ENCODE measurements at regions of chr12 and their contacts with region 1.

Region 1: DNA sequence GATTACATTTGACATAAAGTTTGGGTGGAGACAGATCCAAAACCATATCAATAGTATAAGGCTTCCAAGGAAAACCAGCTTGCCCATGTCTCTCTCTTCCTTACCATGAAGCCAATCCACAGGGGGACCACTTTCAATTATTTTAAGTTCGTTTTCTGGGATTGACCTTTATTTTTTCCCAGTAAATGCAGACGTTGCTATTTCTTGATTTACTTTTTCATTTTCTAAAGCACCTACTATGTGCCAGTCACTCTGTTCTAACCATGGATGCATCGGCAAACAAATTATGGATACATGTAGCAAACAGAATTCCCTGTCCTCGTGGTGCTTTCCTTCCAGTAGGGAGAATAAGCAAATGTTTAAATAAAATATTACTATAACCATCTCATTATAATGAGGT is 65.8 kb upstream of the KCNA1 start:
- DNase-seq: no peak
- ATAC-seq: no peak
- H3K4me3 ChIP-seq: no peak overlapping the region
- H3K4me3 Mint-ChIP-seq: no peak overlapping the region
- H3K27ac ChIP-seq: no peak overlapping the region
- H3K27ac Mint-ChIP-seq: no peak overlapping the region
- H3K4me1 ChIP-seq: no peaks in the 10 kb centered on the region
- H3K4me1 Mint-ChIP-seq: no peaks in the 10 kb centered on the region
- H3K27me3 ChIP-seq: no peaks in the 10 kb centered on the region
- H3K27me3 Mint-ChIP-seq: peaks cover 4% of the 10 kb centered on the region
- CTCF ChIP-seq: no peak

Region 2: DNA sequence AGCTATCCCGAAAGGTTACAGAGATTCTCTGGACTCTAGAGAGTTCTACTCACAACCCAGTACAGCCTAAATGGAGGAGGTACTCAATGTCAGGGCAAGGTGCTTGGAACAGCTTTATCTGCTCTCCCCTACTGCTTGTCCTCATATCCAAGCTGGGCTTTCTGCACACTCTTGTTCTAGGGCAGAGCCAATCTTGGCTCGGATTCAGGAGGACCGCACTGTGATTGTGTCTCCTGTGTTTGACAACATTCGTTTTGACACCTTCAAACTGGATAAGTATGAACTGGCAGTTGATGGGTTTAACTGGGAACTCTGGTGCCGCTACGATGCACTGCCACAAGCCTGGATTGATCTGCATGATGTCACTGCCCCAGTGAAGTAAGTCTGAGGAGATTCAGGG is 98.7 kb before region 1 on chr12:
- CTCF ChIA-PET with region 1: no interaction called
- POLR2A ChIA-PET with region 1: no interaction called
- intact Hi-C with region 1: no loop called
- DNase-seq: no peak
- ATAC-seq: no peak
- H3K4me3 ChIP-seq: no peak overlapping the region
- H3K4me3 Mint-ChIP-seq: no peak overlapping the region
- H3K27ac ChIP-seq: no peak overlapping the region
- H3K27ac Mint-ChIP-seq: no peak overlapping the region
- H3K4me1 ChIP-seq: no peaks in the 10 kb centered on the region
- H3K4me1 Mint-ChIP-seq: no peaks in the 10 kb centered on the region
- H3K27me3 ChIP-seq: no peaks in the 10 kb centered on the region
- H3K27me3 Mint-ChIP-seq: peaks cover 16% of the 10 kb centered on the region
- CTCF ChIP-seq: no peak

Region 3: GRCh38 chr12:4771960-4772566 is 71.8 kb before region 1 on chr12:
- CTCF ChIA-PET with region 1: no interaction called
- POLR2A ChIA-PET with region 1: no interaction called
- intact Hi-C with region 1: no loop called
- DNase-seq: no peak
- ATAC-seq: no peak
- H3K4me3 ChIP-seq: no peak overlapping the region
- H3K4me3 Mint-ChIP-seq: no peak overlapping the region
- H3K27ac ChIP-seq: no peak overlapping the region
- H3K27ac Mint-ChIP-seq: no peak overlapping the region
- H3K4me1 ChIP-seq: no peaks in the 10 kb centered on the region
- H3K4me1 Mint-ChIP-seq: no peaks in the 10 kb centered on the region
- H3K27me3 ChIP-seq: no peaks in the 10 kb centered on the region
- H3K27me3 Mint-ChIP-seq: peaks cover 15% of the 10 kb centered on the region
- CTCF ChIP-seq: no peak

Region 4: DNA sequence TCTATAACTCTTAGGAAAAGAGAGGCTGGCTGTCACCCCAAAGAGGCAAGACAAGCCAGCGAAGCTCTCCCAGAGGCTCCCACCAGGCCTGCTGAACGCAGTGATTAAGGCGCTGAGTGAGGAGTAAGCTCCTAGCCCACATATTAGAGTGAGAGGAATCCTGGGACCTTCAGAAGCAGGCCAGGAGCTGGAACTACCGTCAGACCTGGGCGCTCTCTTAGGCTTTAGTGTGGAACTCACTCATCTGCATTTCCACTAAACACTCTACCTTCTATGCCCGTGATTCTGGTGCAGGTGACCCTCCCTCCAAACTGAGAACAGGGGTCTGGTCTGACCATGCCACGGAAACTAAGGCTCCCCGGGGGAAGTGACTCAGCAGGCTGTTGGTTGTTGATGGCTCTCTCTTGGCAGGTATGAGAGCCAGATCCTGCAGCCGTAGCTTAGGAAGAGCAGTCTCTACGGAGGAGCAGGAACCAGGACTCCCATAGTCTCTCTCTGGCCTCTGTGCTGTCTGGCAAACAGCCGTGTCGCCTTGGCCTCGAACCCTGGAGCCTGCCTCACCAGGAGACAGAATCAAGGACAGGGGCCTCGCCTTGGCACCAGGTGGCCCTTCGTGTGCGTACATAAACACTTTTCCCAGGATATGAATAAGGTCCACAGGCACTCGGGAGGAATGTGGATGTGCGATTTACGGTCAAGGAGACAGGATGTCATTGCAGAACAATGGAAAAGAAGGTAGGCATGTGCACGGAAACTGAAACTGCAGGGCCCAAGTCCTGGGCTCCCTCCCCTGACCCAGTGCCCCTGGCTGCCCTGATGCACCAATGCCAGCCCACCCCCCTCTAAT is 1272.5 kb after region 1 on chr12:
- CTCF ChIA-PET with region 1: no interaction called
- POLR2A ChIA-PET with region 1: no interaction called
- intact Hi-C with region 1: loop called in 1 of 2 experiments (anchors 5 kb)
- DNase-seq: no peak
- ATAC-seq: no peak
- H3K4me3 ChIP-seq: no peak overlapping the region
- H3K4me3 Mint-ChIP-seq: no peak overlapping the region
- H3K27ac ChIP-seq: no peak overlapping the region
- H3K27ac Mint-ChIP-seq: no peak overlapping the region
- H3K4me1 ChIP-seq: no peaks in the 10 kb centered on the region
- H3K4me1 Mint-ChIP-seq: no peaks in the 10 kb centered on the region
- H3K27me3 ChIP-seq: peaks cover 0 to 2% of the 10 kb centered on the region in 2 experiments
- H3K27me3 Mint-ChIP-seq: no peaks in the 10 kb centered on the region
- CTCF ChIP-seq: no peak

Measured in CD4-positive, alpha-beta T cell (primary cell).